Activated B cell treated with CpG ODN at 0.5 μM for 24 hours (primary cell): ENCODE measurements at regions of chr1 and their contacts with region 1.

Region 1: DNA sequence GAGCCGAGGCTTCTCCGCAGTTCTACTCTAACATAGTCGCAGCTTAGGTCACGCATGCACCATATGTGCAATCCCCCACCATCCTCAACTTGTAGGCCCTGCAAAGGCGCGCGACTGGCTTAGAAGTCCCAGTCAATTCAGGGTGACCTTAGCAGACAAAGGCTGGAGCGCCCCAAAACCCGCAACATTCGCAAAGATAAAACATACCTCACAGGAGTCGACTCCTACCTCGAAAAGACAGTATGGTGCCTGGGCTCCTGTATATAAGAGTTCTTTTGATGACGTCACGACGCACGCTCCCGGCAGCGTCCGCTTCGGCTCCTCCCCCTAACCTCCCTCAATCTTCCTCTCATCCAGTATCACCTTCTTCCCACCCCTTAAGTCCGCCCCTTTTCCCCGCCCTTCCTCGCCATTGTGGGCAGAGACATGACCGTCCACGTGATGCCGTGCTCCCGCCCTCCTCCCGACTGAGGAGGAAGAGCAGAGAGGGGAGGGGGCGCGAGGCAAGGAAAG is at the start of gene GAS5:
- DNase-seq: peak; percentile 95
- ATAC-seq: peak; percentile 80
- H3K4me3 Mint-ChIP-seq: peak within 1 kb of the TSS; percentile 97
- H3K27ac Mint-ChIP-seq: peak within 1 kb of the TSS; percentile 97
- H3K4me1 Mint-ChIP-seq: peaks cover 79% of the 10 kb centered on the region
- H3K27me3 Mint-ChIP-seq: no peaks in the 10 kb centered on the region
- CTCF ChIP-seq: no peak
- total RNA-seq, gene GAS5: 701 and 722 TPM in 2 replicates

Region 2: GRCh38 chr1:173409613-173410012 is 458.2 kb before region 1 on chr1:
- CTCF ChIA-PET with region 1: no interaction called
- POLR2A ChIA-PET with region 1: interaction called, 29 read pairs
- intact Hi-C with region 1: no loop called
- DNase-seq: no peak
- ATAC-seq: peak; percentile 25
- H3K4me3 Mint-ChIP-seq: peak overlapping the region; percentile 81
- H3K27ac Mint-ChIP-seq: peak overlapping the region; percentile 95
- H3K4me1 Mint-ChIP-seq: peaks cover 91% of the 10 kb centered on the region
- H3K27me3 Mint-ChIP-seq: no peaks in the 10 kb centered on the region
- CTCF ChIP-seq: no peak

Region 3: DNA sequence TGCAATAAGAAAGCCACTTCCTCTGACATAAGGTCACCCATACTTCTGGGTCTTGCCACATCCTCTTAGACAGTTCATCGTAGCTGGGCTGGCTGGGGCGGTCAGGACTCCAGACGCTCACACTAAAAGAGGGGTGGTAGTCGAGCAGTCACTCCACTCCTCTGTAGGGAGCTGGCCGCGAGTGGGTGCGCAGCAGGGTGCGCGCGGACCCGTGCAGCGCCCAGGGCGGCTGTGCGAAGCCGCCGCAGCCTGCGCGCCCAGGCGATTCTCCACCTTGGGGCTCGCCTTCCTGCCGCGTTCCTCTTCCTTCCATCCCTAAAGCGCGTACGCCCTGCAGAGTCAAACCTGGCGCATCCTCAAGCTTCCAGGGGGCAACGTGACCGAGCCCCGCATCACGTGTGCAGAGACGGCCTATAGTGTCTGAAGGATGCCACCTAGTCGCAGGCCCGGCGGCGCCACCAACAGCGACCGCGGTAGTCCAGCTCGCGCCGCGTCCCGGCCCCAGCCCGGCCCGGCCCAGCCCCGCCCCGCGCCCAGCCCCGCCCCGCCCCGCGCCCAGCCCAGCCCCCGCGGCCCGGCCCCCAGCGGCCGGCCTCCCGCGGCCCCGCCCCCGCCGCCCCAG is 391.0 kb before region 1 on chr1:
- CTCF ChIA-PET with region 1: no interaction called
- POLR2A ChIA-PET with region 1: interaction called, 20 read pairs
- intact Hi-C with region 1: loop called (anchors 1 kb)
- DNase-seq: peak; percentile 70
- ATAC-seq: peak; percentile 94
- H3K4me3 Mint-ChIP-seq: peak overlapping the region; percentile 92
- H3K27ac Mint-ChIP-seq: peak overlapping the region; percentile 95
- H3K4me1 Mint-ChIP-seq: peaks cover 40% of the 10 kb centered on the region
- H3K27me3 Mint-ChIP-seq: no peaks in the 10 kb centered on the region
- CTCF ChIP-seq: no peak

Region 4: GRCh38 chr1:173798078-173798477 is 69.7 kb before region 1 on chr1:
- CTCF ChIA-PET with region 1: no interaction called
- POLR2A ChIA-PET with region 1: no interaction called
- intact Hi-C with region 1: no loop called
- DNase-seq: no peak
- ATAC-seq: no peak
- H3K4me3 Mint-ChIP-seq: no peak overlapping the region
- H3K27ac Mint-ChIP-seq: no peak overlapping the region
- H3K4me1 Mint-ChIP-seq: no peaks in the 10 kb centered on the region
- H3K27me3 Mint-ChIP-seq: no peaks in the 10 kb centered on the region
- CTCF ChIP-seq: no peak

Region 5: GRCh38 chr1:173824331-173825081 is 43.3 kb before region 1 on chr1 and contains the starts of genes CENPL and DARS2:
- CTCF ChIA-PET with region 1: no interaction called
- POLR2A ChIA-PET with region 1: interaction called, 49 read pairs
- intact Hi-C with region 1: loop called (anchors 1 kb)
- DNase-seq: peak; percentile 80
- ATAC-seq: peak; percentile 89
- H3K4me3 Mint-ChIP-seq: peak within 1 kb of the TSS; percentile 95
- H3K27ac Mint-ChIP-seq: peak within 1 kb of the TSS; percentile 97
- H3K4me1 Mint-ChIP-seq: peaks cover 28% of the 10 kb centered on the region
- H3K27me3 Mint-ChIP-seq: no peaks in the 10 kb centered on the region
- CTCF ChIP-seq: no peak
- total RNA-seq, gene CENPL: 12.7 and 14.0 TPM in 2 replicates
- total RNA-seq, gene DARS2: 24.0 and 26.0 TPM in 2 replicates

Region 6: GRCh38 chr1:173900427-173900826 is 32.6 kb after region 1 on chr1:
- CTCF ChIA-PET with region 1: no interaction called
- POLR2A ChIA-PET with region 1: interaction called, 12 read pairs
- intact Hi-C with region 1: no loop called
- DNase-seq: no peak
- ATAC-seq: no peak
- H3K4me3 Mint-ChIP-seq: no peak overlapping the region
- H3K27ac Mint-ChIP-seq: no peak overlapping the region
- H3K4me1 Mint-ChIP-seq: peaks cover 15% of the 10 kb centered on the region
- H3K27me3 Mint-ChIP-seq: no peaks in the 10 kb centered on the region
- CTCF ChIP-seq: no peak

Region 7: GRCh38 chr1:174022080-174022975 is 154.5 kb after region 1 on chr1 and contains the start of gene RC3H1:
- CTCF ChIA-PET with region 1: no interaction called
- POLR2A ChIA-PET with region 1: interaction called, 22 read pairs
- intact Hi-C with region 1: loop called (anchors 1 kb)
- DNase-seq: peak; percentile 88
- ATAC-seq: peak; percentile 93
- H3K4me3 Mint-ChIP-seq: peak within 1 kb of the TSS; percentile 97
- H3K27ac Mint-ChIP-seq: peak within 1 kb of the TSS; percentile 96
- H3K4me1 Mint-ChIP-seq: peaks cover 42% of the 10 kb centered on the region
- H3K27me3 Mint-ChIP-seq: no peaks in the 10 kb centered on the region
- CTCF ChIP-seq: no peak
- total RNA-seq, gene RC3H1: 45.6 and 55.6 TPM in 2 replicates

Region 8: GRCh38 chr1:174217787-174218574 is 350.2 kb after region 1 on chr1:
- CTCF ChIA-PET with region 1: no interaction called
- POLR2A ChIA-PET with region 1: interaction called, 5 read pairs
- intact Hi-C with region 1: loop called (anchors 2 kb)
- DNase-seq: no peak
- ATAC-seq: peak; percentile 81
- H3K4me3 Mint-ChIP-seq: no peak overlapping the region
- H3K27ac Mint-ChIP-seq: no peak overlapping the region
- H3K4me1 Mint-ChIP-seq: peaks cover 28% of the 10 kb centered on the region
- H3K27me3 Mint-ChIP-seq: no peaks in the 10 kb centered on the region
- CTCF ChIP-seq: peak; percentile 23